K562 (cell line): ENCODE measurements at regions of chr4 and their contacts with region 1.

Region 1: GRCh38 chr4:76430519-76431388 is 4.3 kb upstream of the SHROOM3 start:
- DNase-seq: peak in 2 of 4 experiments; percentile 42 to 55
- ATAC-seq: peak; percentile 74
- H3K4me3 ChIP-seq: no peak overlapping the region
- H3K27ac ChIP-seq: no peak overlapping the region
- H3K4me1 ChIP-seq: no peaks in the 10 kb centered on the region
- H3K27me3 ChIP-seq: peaks cover 1 to 5% of the 10 kb centered on the region in 2 experiments; a peak in 3 of 5 replicates
- CTCF ChIP-seq: peak; percentile 44 to 81 (median 50); a peak in 4 of 6 replicates
- EP300 ChIP-seq: no peak
- POLR2A ChIP-seq: no peak
- RAD21 ChIP-seq: peak; percentile 58 to 76

Region 2: DNA sequence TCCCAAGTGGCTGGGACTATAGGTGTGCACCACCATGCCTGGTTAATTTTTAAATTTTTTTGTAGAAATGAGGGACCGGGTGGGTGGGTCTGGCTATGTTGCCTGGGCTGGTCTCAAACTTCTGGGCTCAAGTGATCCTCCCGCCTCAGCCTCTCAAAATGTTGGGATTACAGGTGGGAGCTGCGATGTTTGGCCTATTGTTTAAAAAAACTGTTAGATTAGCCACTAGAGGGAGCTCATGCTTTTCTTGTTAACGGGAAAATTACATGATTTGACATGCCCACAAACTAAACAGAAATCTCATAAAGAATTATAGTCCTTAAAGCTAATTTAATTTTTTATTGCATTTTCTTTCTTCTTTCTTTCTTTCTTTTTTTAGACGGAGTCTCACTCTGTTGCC is 435.0 kb before region 1 on chr4:
- CTCF ChIA-PET with region 1: interaction called, 3 read pairs
- POLR2A ChIA-PET with region 1: no interaction called
- in situ Hi-C with region 1: no loop called
- intact Hi-C with region 1: loop called (anchors 5 kb)
- DNase-seq: peak; percentile 36 to 60 (median 42)
- ATAC-seq: peak; percentile 53
- H3K4me3 ChIP-seq: no peak overlapping the region
- H3K27ac ChIP-seq: no peak overlapping the region
- H3K4me1 ChIP-seq: peaks cover 0 to 3% of the 10 kb centered on the region in 2 experiments; a peak in 2 of 5 replicates
- H3K27me3 ChIP-seq: no peaks in the 10 kb centered on the region
- CTCF ChIP-seq: peak; percentile 41 to 75 (median 54); a peak in 5 of 6 replicates
- EP300 ChIP-seq: no peak
- POLR2A ChIP-seq: no peak
- RAD21 ChIP-seq: peak; percentile 81

Region 3: GRCh38 chr4:76179398-76180318 is 251.1 kb before region 1 on chr4:
- CTCF ChIA-PET with region 1: no interaction called
- POLR2A ChIA-PET with region 1: no interaction called
- in situ Hi-C with region 1: no loop called
- intact Hi-C with region 1: loop called (anchors 1 kb)
- DNase-seq: peak; percentile 77 to 90 (median 83)
- ATAC-seq: peak; percentile 100
- H3K4me3 ChIP-seq: no peak overlapping the region
- H3K27ac ChIP-seq: peak overlapping the region; percentile 13; the same call in 1 of the 3 replicates
- H3K4me1 ChIP-seq: peaks cover 0 to 5% of the 10 kb centered on the region in 2 experiments; a peak in 3 of 5 replicates
- H3K27me3 ChIP-seq: no peaks in the 10 kb centered on the region
- CTCF ChIP-seq: peak; percentile 84 to 91 (median 90)
- EP300 ChIP-seq: no peak
- POLR2A ChIP-seq: no peak
- RAD21 ChIP-seq: peak; percentile 79 to 92

Region 4: GRCh38 chr4:76322236-76322635 is 108.5 kb before region 1 on chr4:
- CTCF ChIA-PET with region 1: no interaction called
- POLR2A ChIA-PET with region 1: no interaction called
- in situ Hi-C with region 1: no loop called
- intact Hi-C with region 1: no loop called
- DNase-seq: no peak
- ATAC-seq: no peak
- H3K4me3 ChIP-seq: no peak overlapping the region
- H3K27ac ChIP-seq: no peak overlapping the region
- H3K4me1 ChIP-seq: no peaks in the 10 kb centered on the region
- H3K27me3 ChIP-seq: no peaks in the 10 kb centered on the region
- CTCF ChIP-seq: no peak
- EP300 ChIP-seq: no peak
- POLR2A ChIP-seq: no peak
- RAD21 ChIP-seq: no peak

Region 5: GRCh38 chr4:76504613-76505465 is 74.1 kb after region 1 on chr4:
- CTCF ChIA-PET with region 1: interaction called, 39 read pairs
- POLR2A ChIA-PET with region 1: interaction called, 3 read pairs
- in situ Hi-C with region 1: loop called (anchors 5 kb)
- intact Hi-C with region 1: loop called (anchors 1 kb)
- DNase-seq: peak; percentile 13 to 52 (median 28)
- ATAC-seq: peak; percentile 70
- H3K4me3 ChIP-seq: no peak overlapping the region
- H3K27ac ChIP-seq: no peak overlapping the region
- H3K4me1 ChIP-seq: no peaks in the 10 kb centered on the region
- H3K27me3 ChIP-seq: peaks cover 2 to 16% of the 10 kb centered on the region in 2 experiments; a peak in 3 of 5 replicates
- CTCF ChIP-seq: peak; percentile 48 to 71 (median 53); a peak in 4 of 6 replicates
- EP300 ChIP-seq: no peak
- POLR2A ChIP-seq: no peak
- RAD21 ChIP-seq: peak; percentile 67 to 79

Region 6: GRCh38 chr4:76585897-76586360 is 155.2 kb after region 1 on chr4:
- CTCF ChIA-PET with region 1: no interaction called
- POLR2A ChIA-PET with region 1: no interaction called
- in situ Hi-C with region 1: no loop called
- intact Hi-C with region 1: no loop called
- DNase-seq: peak in 2 of 4 experiments; percentile 2 to 11
- ATAC-seq: peak; percentile 80
- H3K4me3 ChIP-seq: no peak overlapping the region
- H3K27ac ChIP-seq: no peak overlapping the region
- H3K4me1 ChIP-seq: peaks cover 0 to 6% of the 10 kb centered on the region in 2 experiments; a peak in 2 of 5 replicates
- H3K27me3 ChIP-seq: peaks cover 20 to 45% of the 10 kb centered on the region in 2 experiments; a peak in 4 of 5 replicates
- CTCF ChIP-seq: no peak
- EP300 ChIP-seq: no peak
- POLR2A ChIP-seq: no peak
- RAD21 ChIP-seq: no peak

Region 7: DNA sequence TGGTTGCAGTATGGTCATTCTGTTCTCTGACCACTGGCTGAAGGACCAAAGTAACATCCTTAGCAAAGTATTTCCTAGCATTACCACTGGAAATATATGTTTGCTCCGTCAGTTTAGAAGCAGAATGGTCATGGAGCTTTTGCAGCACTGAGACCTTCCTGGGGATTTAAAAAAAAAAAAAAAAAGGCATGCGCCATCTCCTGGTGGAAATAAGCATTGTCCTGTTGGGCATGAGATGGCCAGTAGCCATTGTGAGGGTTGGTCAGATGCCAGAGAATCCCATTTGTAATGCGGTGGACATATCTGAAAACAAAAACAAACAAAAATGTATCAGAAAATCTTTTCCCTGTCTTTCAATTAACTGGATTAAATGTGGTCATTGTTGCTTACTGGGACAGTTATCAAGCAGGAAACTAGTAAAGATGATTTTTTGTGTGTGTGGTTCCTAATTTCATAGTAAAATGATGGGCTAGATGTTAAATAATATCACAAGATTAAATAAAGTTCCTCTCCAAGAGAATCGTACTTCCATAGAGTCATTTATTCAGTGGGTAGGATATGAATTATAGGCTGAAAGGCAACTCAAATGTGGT is 327.6 kb after region 1 on chr4:
- CTCF ChIA-PET with region 1: interaction called, 20 read pairs
- POLR2A ChIA-PET with region 1: interaction called, 3 read pairs
- in situ Hi-C with region 1: loop called (anchors 10 kb)
- intact Hi-C with region 1: loop called (anchors 1 kb)
- DNase-seq: peak; percentile 40 to 75 (median 61)
- ATAC-seq: peak; percentile 87
- H3K4me3 ChIP-seq: no peak overlapping the region
- H3K27ac ChIP-seq: no peak overlapping the region
- H3K4me1 ChIP-seq: no peaks in the 10 kb centered on the region
- H3K27me3 ChIP-seq: peaks cover 16 to 24% of the 10 kb centered on the region in 2 experiments
- CTCF ChIP-seq: peak; percentile 51 to 72 (median 65)
- EP300 ChIP-seq: no peak
- POLR2A ChIP-seq: no peak
- RAD21 ChIP-seq: peak; percentile 13 to 26; a peak in 1 of 4 replicates

Region 8: GRCh38 chr4:77044461-77045150 is 613.9 kb after region 1 on chr4:
- CTCF ChIA-PET with region 1: no interaction called
- POLR2A ChIA-PET with region 1: no interaction called
- in situ Hi-C with region 1: no loop called
- intact Hi-C with region 1: loop called (anchors 2 kb)
- DNase-seq: peak; percentile 16 to 44 (median 20)
- ATAC-seq: peak; percentile 68
- H3K4me3 ChIP-seq: no peak overlapping the region
- H3K27ac ChIP-seq: no peak overlapping the region
- H3K4me1 ChIP-seq: peaks cover 0 to 8% of the 10 kb centered on the region in 2 experiments; a peak in 2 of 5 replicates
- H3K27me3 ChIP-seq: no peaks in the 10 kb centered on the region
- CTCF ChIP-seq: peak; percentile 32 to 67 (median 63); a peak in 4 of 6 replicates
- EP300 ChIP-seq: no peak
- POLR2A ChIP-seq: no peak
- RAD21 ChIP-seq: peak; percentile 55 to 58

Region 9: DNA sequence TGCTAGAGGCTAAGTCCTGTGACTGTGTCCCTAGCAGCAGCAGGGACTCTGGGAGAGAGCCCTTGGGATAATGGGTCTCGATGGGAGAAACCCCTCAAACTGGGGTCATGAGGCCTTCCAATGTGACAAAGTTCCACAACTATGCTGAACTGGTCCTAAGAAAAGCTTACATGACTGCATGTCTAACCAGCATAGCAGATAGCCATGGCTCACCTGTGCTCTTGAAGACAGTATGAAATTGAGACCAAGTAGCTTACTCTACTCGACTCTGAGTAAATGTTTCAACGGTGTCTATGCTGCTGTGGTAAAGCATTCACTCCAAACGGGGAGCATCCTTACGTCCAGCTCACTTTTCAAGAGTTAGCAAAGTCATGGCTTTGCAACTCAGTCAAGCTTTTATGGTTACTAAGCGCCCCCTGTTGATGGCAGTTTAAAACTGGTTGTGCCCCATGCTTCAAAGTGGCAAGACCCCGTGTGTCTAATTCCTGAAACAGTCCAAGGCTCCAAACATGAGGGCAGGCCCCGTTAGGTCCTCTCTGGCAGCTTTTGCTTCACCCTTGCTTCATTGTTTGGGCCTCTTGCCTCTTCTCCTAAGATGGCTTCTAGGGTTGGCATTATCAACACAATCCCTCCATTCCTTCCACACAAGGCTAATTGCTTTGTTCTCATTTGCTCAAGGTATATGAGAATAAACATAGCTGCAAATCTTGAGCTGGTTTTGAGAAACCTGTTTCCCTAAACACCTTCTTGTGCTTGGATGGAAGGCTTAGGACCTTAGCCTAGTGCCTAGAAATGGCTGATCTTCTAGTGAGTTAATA is 772.8 kb after region 1 on chr4:
- CTCF ChIA-PET with region 1: no interaction called
- POLR2A ChIA-PET with region 1: no interaction called
- in situ Hi-C with region 1: no loop called
- intact Hi-C with region 1: loop called (anchors 10 kb)
- DNase-seq: peak; percentile 61 to 82 (median 65)
- ATAC-seq: peak; percentile 95
- H3K4me3 ChIP-seq: no peak overlapping the region
- H3K27ac ChIP-seq: no peak overlapping the region
- H3K4me1 ChIP-seq: no peaks in the 10 kb centered on the region
- H3K27me3 ChIP-seq: peaks cover 16 to 21% of the 10 kb centered on the region in 2 experiments; a peak in 4 of 5 replicates
- CTCF ChIP-seq: peak; percentile 76 to 89 (median 84)
- EP300 ChIP-seq: no peak
- POLR2A ChIP-seq: no peak
- RAD21 ChIP-seq: peak; percentile 83 to 89